HepG2 (cell line): ENCODE measurements at regions of chr20 and their contacts with region 1.

Region 1: DNA sequence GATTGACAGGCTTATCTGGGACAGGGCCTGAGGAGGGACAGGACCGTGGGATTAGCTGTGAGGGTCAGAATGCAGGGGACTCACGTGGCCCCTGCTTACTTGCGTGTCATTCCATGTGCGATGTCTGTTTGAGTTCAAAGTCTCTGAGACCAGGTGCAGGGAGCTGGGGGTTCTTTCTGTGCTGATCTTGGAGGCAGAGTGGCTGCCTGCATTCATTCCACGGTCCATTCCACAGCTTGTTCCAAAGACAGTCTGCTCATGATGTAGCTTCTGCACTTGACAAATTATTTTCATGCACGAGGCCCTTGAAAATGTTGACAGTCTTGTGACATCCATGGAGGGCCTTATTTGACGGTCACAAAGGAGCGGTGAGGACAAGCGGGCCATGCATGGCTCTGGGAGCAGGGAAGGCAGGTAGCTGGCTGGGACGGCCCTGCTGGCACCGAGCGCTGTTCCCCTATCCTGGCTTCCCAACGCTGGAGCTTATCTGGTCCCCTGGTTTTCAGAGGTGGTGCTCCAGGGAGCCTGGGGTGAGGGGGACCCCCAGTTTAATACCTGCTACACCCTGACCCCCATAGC is 156.3 kb upstream of the RNF24 start:
- DNase-seq: peak; percentile 98
- ATAC-seq: peak; percentile 72
- H3K4me3 ChIP-seq: peak overlapping the region; percentile 57 to 77 (median 64)
- H3K27ac ChIP-seq: peak overlapping the region; percentile 91
- H3K4me1 ChIP-seq: peaks cover 58% of the 10 kb centered on the region
- H3K27me3 ChIP-seq: no peaks in the 10 kb centered on the region; a peak in 1 of 5 replicates
- CTCF ChIP-seq: peak; percentile 29
- EP300 ChIP-seq: peak; percentile 77 to 79
- POLR2A ChIP-seq: peak; percentile 82 to 98
- RAD21 ChIP-seq: peak; percentile 37; the same call in 1 of the 2 replicates

Region 2: DNA sequence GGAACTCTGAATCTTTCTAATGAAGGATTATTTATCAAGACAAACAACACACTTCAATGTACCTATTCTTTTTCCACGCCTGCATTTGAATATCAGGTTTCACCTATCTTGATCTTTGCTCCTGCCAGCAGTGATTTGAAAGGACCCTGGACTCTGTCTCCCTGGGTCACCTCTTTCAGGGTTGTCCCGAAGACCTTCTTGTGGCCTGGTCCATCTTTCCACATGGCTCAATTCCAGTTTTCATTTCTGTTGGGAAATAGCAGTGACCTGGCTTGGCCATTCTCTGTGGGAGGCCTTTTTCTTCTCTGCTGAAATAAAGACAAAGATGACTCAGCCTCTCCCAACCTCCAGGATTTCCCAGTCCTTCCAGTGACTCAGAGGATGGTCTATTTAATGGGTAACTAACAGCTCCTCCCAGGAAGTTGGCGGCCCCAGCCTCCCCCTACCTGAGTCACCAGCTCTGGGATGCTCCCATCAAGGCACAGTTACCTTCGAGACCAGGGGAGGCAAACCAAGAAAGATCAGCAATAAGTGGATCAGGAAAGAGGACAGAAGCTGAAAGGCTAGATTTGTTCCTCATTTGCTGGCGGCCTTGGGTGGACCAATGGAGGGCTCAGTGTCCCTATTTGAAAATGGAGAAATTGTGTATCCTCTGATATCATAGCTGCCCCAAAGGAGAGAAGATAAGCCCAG is 36.1 kb before region 1 on chr20:
- CTCF ChIA-PET with region 1: no interaction called
- POLR2A ChIA-PET with region 1: interaction called, 55 read pairs
- in situ Hi-C with region 1: no loop called
- intact Hi-C with region 1: loop called (anchors 1 kb)
- DNase-seq: peak; percentile 99
- ATAC-seq: peak; percentile 91
- H3K4me3 ChIP-seq: peak overlapping the region; percentile 27 to 59 (median 28); a peak in 5 of 6 replicates
- H3K27ac ChIP-seq: peak overlapping the region; percentile 51
- H3K4me1 ChIP-seq: peaks cover 40% of the 10 kb centered on the region
- H3K27me3 ChIP-seq: no peaks in the 10 kb centered on the region
- CTCF ChIP-seq: 0 out of 2 replicates have a peak, but pooled peaks have one; percentile 7
- EP300 ChIP-seq: peak; percentile 35 to 91; a peak in 3 of 4 replicates
- POLR2A ChIP-seq: peak in 1 of 2 experiments; percentile 46; a peak in 1 of 4 replicates
- RAD21 ChIP-seq: peak; percentile 4; the same call in 1 of the 2 replicates

Region 3: DNA sequence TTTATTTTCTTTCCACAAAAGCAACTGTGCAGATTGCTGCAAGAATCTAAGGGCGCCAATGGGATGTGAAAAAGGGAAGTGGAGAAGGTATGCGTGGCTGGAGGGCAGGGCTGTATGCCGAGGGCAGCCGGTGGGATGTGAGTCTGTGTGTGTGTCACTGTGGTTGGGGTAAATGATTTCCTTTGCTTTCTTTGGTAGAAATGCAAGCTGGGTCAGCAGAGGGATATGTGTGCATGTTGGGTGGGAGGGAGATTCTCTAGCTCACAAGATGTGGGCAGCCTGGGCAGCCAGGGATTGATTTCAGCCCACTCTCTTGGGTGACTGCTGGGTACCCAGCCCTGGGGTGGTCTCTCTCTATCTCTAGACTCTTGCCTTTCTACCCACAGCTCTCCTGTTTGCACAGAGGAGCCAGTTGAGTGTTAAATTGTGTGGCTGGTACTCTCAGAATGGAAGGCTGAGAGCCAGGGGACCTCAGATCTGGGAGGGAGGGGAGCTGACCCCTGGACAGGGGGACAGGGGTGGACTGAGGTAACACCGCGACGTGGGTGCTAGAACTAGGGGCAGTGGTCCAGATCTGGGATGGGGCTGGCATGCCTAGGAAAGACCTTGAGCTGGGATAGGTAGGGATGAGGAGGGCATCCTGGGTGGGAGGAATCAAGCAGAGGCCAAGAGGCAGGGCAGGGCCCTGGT is 19.5 kb before region 1 on chr20:
- CTCF ChIA-PET with region 1: no interaction called
- POLR2A ChIA-PET with region 1: interaction called, 27 read pairs
- in situ Hi-C with region 1: no loop called
- intact Hi-C with region 1: no loop called
- DNase-seq: no peak
- ATAC-seq: no peak
- H3K4me3 ChIP-seq: no peak overlapping the region
- H3K27ac ChIP-seq: no peak overlapping the region
- H3K4me1 ChIP-seq: peaks cover 37% of the 10 kb centered on the region
- H3K27me3 ChIP-seq: no peaks in the 10 kb centered on the region; a peak in 1 of 5 replicates
- CTCF ChIP-seq: no peak
- EP300 ChIP-seq: no peak
- POLR2A ChIP-seq: no peak
- RAD21 ChIP-seq: no peak

Region 4: GRCh38 chr20:4216142-4216735 is 44.6 kb after region 1 on chr20:
- CTCF ChIA-PET with region 1: no interaction called
- POLR2A ChIA-PET with region 1: no interaction called
- in situ Hi-C with region 1: no loop called
- intact Hi-C with region 1: no loop called
- DNase-seq: no peak
- ATAC-seq: no peak
- H3K4me3 ChIP-seq: no peak overlapping the region
- H3K27ac ChIP-seq: no peak overlapping the region
- H3K4me1 ChIP-seq: peaks cover 17% of the 10 kb centered on the region
- H3K27me3 ChIP-seq: no peaks in the 10 kb centered on the region; a peak in 1 of 5 replicates
- CTCF ChIP-seq: no peak
- EP300 ChIP-seq: no peak
- POLR2A ChIP-seq: no peak
- RAD21 ChIP-seq: no peak